Naive thymus-derived CD4-positive, alpha-beta T cell (primary cell): ENCODE measurements at regions of chr9 and their contacts with region 1.

Region 1: DNA sequence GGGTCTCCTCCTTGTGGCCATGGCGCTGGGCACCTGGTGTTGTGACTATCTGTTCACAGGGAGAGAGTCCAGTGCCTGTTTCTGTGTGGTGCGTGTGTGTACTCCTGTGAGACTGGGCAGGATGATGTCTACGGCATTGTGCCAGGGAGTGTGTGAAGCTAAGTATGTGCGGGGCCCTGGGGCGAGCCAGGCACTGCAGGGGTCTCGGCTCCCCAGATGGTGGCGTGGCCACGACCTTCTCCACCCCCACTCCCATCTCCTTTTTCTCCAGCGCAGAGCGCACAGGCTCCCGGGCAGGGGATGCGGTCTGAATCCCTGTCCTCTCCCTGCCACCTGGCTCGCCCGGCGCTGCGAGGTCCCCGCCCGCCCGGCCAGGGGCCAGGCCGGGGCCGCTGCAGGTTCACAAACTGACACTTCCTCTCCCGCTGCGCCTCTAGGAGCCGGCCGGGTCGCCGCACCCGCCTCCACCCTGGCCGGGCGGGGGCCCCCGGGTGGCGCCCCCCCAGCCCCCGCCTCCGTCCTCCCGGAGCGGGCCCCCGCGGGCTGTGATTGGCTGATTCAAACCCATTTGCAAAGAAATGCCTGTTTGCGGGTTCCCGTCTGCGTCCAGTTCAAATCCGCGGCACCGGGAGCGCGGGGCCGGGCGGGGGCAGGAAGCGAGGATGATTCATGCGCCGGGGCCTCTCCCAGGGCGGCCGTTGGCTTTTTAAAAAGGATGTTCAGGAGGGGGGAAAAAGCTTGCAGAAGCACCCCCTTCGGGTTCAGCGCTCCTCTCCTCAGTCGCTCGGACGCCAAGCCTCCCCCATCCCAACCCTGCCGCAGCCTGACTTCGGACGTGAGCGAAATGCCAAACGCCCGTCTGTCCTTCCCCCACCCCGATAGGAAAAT is 790 bp downstream of the PHF19 start:
- DNase-seq: peak; percentile 50 to 91 (median 56)
- ATAC-seq: peak; percentile 64
- H3K4me3 ChIP-seq: peak overlapping the region; percentile 66
- H3K4me3 Mint-ChIP-seq: peak overlapping the region; percentile 81 to 95 (median 85)
- H3K27ac ChIP-seq: peak overlapping the region; percentile 88
- H3K27ac Mint-ChIP-seq: peak overlapping the region; percentile 76 to 97 (median 90)
- H3K4me1 ChIP-seq: peaks cover 31 to 39% of the 10 kb centered on the region in 2 donors
- H3K4me1 Mint-ChIP-seq: peaks cover 38 to 78% (median 69%) of the 10 kb centered on the region in 7 donors
- H3K27me3 ChIP-seq: no peaks in the 10 kb centered on the region
- H3K27me3 Mint-ChIP-seq: no peaks in the 10 kb centered on the region

Region 2: DNA sequence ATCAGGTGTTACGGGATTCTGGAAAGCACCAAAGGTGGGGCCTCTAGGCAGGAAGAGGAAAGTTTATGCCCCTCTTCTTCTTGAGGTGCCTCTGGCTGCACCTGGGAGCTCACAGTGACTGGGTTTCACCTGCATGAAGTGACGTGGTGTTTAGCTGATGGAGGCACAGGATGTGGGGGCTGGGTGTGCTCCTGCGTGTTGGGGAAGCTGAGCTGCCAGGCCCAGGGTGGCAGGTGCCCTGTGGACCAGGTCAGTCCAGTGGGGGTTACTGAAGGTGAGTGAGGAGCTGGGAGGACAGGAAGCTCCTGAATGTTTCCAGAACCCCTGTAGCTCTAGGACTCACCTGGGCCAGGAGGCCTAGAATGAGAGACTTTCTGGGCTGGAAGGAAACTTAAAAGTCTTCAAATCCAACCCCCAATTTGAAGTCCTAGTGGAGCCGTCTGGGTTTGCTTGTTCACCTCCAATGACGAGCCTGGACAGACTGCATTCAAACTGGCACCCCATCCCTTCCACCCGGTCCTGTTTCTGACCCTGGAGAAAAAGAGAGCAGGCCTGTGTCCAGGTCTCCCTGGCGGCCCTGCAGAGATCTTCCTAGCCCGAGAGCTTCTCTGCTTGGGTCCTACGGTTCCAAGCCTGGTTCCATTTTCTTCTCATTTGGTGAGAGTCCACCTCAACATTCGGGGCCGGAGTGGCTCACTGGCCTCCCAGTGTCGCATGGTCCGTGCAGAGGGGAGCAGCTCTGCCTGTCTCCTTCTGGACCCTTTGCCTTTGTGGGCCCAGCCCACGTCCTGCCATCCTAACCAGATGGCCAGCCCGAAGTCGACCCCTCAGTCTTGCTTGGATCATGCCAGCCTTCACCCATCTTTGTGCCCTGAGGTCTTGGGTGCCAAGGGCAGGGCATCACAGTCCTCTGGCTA is 28.1 kb after region 1 on chr9:
- CTCF ChIA-PET with region 1: interaction called, 7 read pairs
- POLR2A ChIA-PET with region 1: interaction called, 703 read pairs
- intact Hi-C with region 1: loop called in 1 of 2 experiments (anchors 1 kb)
- DNase-seq: peak in 8 of 9 donors; percentile 41 to 89 (median 86)
- ATAC-seq: peak; percentile 95
- H3K4me3 ChIP-seq: no peak overlapping the region
- H3K4me3 Mint-ChIP-seq: peak overlapping the region; percentile 38 to 72 (median 56)
- H3K27ac ChIP-seq: peak overlapping the region; percentile 95
- H3K27ac Mint-ChIP-seq: peak overlapping the region; percentile 90 to 100 (median 96)
- H3K4me1 ChIP-seq: peaks cover 64 to 79% of the 10 kb centered on the region in 2 donors
- H3K4me1 Mint-ChIP-seq: peaks cover 48 to 91% (median 86%) of the 10 kb centered on the region in 7 donors
- H3K27me3 ChIP-seq: no peaks in the 10 kb centered on the region
- H3K27me3 Mint-ChIP-seq: no peaks in the 10 kb centered on the region

Region 3: DNA sequence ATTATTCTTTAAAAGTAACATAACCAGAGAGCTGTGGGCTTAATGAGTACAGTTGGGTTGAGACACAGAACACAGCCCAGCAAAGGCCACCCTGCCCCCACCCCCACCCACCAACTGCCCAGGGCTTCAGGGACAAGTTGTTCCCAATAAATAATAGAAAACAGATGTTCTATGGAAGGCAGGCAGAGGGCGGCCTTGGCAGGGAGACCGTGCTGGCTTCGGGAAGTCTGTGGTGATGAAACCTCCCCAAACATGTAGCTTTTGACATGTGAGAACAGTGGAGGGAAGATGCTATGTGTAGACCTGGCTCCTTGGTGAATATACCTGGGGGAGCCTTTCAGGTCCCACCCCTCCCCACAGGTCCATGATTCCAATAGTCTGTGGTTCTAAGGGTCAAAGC is 40.4 kb after region 1 on chr9:
- CTCF ChIA-PET with region 1: interaction called, 4 read pairs
- POLR2A ChIA-PET with region 1: interaction called, 703 read pairs
- intact Hi-C with region 1: no loop called
- DNase-seq: no peak
- ATAC-seq: no peak
- H3K4me3 ChIP-seq: no peak overlapping the region
- H3K4me3 Mint-ChIP-seq: peak overlapping the region; percentile 60 to 79 (median 74)
- H3K27ac ChIP-seq: peak overlapping the region; percentile 59
- H3K27ac Mint-ChIP-seq: peak overlapping the region; percentile 82 to 95 (median 92)
- H3K4me1 ChIP-seq: peaks cover 72% of the 10 kb centered on the region in 2 donors
- H3K4me1 Mint-ChIP-seq: peaks cover 60 to 92% (median 81%) of the 10 kb centered on the region in 7 donors
- H3K27me3 ChIP-seq: no peaks in the 10 kb centered on the region
- H3K27me3 Mint-ChIP-seq: no peaks in the 10 kb centered on the region

Region 4: DNA sequence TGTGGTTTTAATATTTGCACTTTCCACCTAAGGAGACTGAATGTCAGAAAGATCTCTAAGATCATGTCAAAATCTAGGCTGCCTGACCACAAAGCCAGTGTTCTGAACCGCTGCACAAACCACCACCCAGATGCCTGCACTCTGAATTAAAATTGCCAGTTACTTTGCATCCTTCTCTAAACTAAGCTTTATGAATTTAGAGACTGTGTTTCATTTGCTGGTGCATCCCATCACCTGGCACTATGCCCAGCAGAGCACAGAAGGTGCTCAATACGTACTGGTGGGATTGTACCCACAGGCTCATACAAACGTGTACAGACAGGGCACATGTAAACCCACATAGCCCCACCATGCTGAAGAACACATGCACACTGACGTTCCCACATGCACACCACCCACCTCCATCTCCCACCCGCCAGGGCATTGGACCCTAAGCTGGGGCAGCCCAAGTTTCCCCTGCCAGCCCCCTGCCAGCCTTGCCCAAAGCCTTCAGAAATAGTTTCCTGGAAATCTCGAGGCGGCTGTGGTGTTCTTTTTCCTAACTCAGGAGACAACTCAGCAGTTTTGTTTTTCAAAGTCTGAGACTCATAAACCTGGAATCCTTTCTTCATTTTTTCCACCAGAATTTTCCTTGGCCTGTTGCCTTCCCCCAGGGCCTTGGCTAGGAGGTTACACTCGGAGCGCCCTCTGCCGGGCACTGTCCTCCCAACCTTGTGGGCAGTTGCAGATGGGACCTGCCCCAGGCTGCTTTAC is 60.0 kb after region 1 on chr9:
- CTCF ChIA-PET with region 1: interaction called, 49 read pairs
- POLR2A ChIA-PET with region 1: interaction called, 243 read pairs
- intact Hi-C with region 1: loop called (anchors 1 kb)
- DNase-seq: peak; percentile 71 to 89 (median 82)
- ATAC-seq: peak; percentile 85
- H3K4me3 ChIP-seq: peak overlapping the region; percentile 21
- H3K4me3 Mint-ChIP-seq: peak overlapping the region; percentile 33 to 77 (median 62)
- H3K27ac ChIP-seq: peak overlapping the region; percentile 97
- H3K27ac Mint-ChIP-seq: peak overlapping the region; percentile 88 to 100 (median 98)
- H3K4me1 ChIP-seq: peaks cover 61% of the 10 kb centered on the region in 2 donors
- H3K4me1 Mint-ChIP-seq: peaks cover 31 to 71% (median 63%) of the 10 kb centered on the region in 7 donors
- H3K27me3 ChIP-seq: no peaks in the 10 kb centered on the region
- H3K27me3 Mint-ChIP-seq: peaks cover 0 to 2% (median 0%) of the 10 kb centered on the region in 5 donors

Region 5: DNA sequence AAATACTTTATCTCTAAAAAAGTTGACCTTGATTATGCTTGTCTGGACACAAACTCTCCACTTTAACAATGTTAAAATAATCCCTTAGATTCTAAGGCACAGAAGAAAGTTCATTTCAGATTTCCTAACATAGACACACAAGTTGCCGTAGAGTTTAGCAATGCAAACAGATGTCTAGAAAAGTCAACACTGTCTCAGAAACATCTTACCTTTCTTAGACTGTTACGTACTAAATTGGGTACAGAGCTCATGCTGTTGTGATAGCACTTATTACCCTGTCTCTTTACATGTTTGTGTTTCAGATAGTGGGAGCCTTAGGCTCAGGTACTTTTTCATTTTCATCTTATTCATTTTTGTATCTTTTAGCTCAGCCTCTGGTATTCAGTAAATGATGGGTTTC is 121.9 kb after region 1 on chr9:
- CTCF ChIA-PET with region 1: no interaction called
- POLR2A ChIA-PET with region 1: no interaction called
- intact Hi-C with region 1: no loop called
- DNase-seq: no peak
- ATAC-seq: no peak
- H3K4me3 ChIP-seq: no peak overlapping the region
- H3K4me3 Mint-ChIP-seq: no peak overlapping the region
- H3K27ac ChIP-seq: no peak overlapping the region
- H3K27ac Mint-ChIP-seq: no peak overlapping the region
- H3K4me1 ChIP-seq: no peaks in the 10 kb centered on the region
- H3K4me1 Mint-ChIP-seq: no peaks in the 10 kb centered on the region
- H3K27me3 ChIP-seq: no peaks in the 10 kb centered on the region
- H3K27me3 Mint-ChIP-seq: peaks cover 0 to 6% (median 0%) of the 10 kb centered on the region in 5 donors